Activated CD4-positive, alpha-beta T cell treated with anti-CD3 and anti-CD28 coated beads for 36 hours (primary cell): ENCODE measurements at regions of chr1 and their contacts with region 1.

Region 1: DNA sequence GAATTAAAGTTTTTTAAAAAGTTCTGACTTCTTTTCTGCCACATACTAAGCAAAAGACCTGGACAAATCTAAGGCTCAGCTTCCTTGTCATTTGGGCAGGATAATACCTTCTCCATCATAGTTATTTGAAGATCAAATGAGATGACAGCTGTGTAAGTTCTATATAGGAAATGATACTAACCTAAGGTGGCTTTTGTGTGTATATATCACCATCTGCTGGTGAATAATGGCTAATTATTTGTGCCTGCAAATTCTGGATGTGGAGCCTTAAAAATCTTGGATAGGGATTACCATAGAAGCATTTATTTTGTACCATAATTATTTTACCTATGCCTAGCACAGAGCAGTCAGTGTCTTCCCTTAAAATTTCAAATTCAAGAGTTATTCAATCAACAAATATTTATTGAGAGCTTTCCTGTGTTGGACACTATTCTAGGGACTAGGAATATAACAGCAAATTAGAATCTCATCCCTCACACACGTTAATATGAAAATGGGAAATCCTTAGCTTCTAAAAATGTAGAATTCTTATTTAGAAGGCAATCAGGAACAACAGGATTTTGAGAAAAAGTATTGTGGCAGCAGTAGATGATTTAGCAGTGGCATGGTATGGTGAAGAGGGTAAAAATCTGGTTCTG is 89.8 kb downstream of the TMEM200B start:
- DNase-seq: no peak
- ATAC-seq: peak; percentile 53
- H3K4me3 Mint-ChIP-seq: no peak overlapping the region
- H3K27ac Mint-ChIP-seq: no peak overlapping the region
- H3K4me1 Mint-ChIP-seq: no peaks in the 10 kb centered on the region
- H3K27me3 Mint-ChIP-seq: no peaks in the 10 kb centered on the region

Region 2: GRCh38 chr1:28893403-28894102 is 140.4 kb before region 1 on chr1:
- CTCF ChIA-PET with region 1: interaction called, 51 read pairs
- POLR2A ChIA-PET with region 1: no interaction called
- intact Hi-C with region 1: no loop called
- DNase-seq: peak; percentile 52
- ATAC-seq: peak; percentile 44
- H3K4me3 Mint-ChIP-seq: no peak overlapping the region
- H3K27ac Mint-ChIP-seq: no peak overlapping the region
- H3K4me1 Mint-ChIP-seq: peaks cover 21% of the 10 kb centered on the region
- H3K27me3 Mint-ChIP-seq: no peaks in the 10 kb centered on the region

Region 3: GRCh38 chr1:28983509-28984310 is 50.2 kb before region 1 on chr1:
- CTCF ChIA-PET with region 1: interaction called, 11 read pairs
- POLR2A ChIA-PET with region 1: no interaction called
- intact Hi-C with region 1: no loop called
- DNase-seq: no peak
- ATAC-seq: no peak
- H3K4me3 Mint-ChIP-seq: no peak overlapping the region
- H3K27ac Mint-ChIP-seq: peak overlapping the region; percentile 31
- H3K4me1 Mint-ChIP-seq: peaks cover 56% of the 10 kb centered on the region
- H3K27me3 Mint-ChIP-seq: no peaks in the 10 kb centered on the region

Region 4: GRCh38 chr1:29124366-29125236 is 90.7 kb after region 1 on chr1:
- CTCF ChIA-PET with region 1: interaction called, 8 read pairs
- POLR2A ChIA-PET with region 1: no interaction called
- intact Hi-C with region 1: loop called in 1 of 2 experiments (anchors 2 kb)
- DNase-seq: peak; percentile 79
- ATAC-seq: peak; percentile 62
- H3K4me3 Mint-ChIP-seq: peak overlapping the region; percentile 65
- H3K27ac Mint-ChIP-seq: no peak overlapping the region
- H3K4me1 Mint-ChIP-seq: peaks cover 2% of the 10 kb centered on the region
- H3K27me3 Mint-ChIP-seq: peaks cover 12% of the 10 kb centered on the region

Region 5: DNA sequence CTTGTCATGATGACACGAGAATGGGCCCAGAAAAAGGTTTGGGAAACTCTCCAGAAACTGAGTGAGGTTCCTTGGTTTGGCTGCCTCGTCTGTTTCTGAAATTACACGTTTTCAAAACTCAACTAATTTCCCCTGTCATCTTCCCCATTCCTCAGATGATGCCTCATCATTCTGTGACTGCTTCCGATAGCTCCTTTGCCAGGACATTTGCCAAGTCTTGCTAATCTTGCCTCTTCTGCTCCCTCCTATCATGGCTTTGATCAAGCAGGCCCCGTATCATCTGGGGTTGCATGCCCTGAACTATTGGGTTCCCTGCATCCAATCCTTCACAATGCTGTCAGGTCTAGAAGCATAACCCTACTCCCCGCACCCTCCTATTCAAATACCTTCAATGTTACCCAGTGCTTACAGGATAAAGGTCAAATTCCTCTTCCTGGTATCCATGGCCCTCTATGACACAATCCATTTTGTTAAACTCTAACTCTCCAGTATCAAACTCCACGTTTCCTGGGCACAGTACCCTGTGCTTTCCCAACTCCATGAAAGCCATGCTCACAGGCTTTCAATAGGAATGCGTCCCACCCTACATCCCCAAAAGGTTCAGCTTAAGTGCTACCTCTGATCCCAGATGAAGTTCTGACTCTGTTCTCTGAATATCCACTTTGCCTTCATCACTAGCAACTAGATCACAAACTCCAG is 111.9 kb after region 1 on chr1:
- CTCF ChIA-PET with region 1: no interaction called
- POLR2A ChIA-PET with region 1: no interaction called
- intact Hi-C with region 1: no loop called
- DNase-seq: no peak
- ATAC-seq: no peak
- H3K4me3 Mint-ChIP-seq: no peak overlapping the region
- H3K27ac Mint-ChIP-seq: no peak overlapping the region
- H3K4me1 Mint-ChIP-seq: no peaks in the 10 kb centered on the region
- H3K27me3 Mint-ChIP-seq: no peaks in the 10 kb centered on the region